CD8-positive, alpha-beta memory T cell (primary cell): ENCODE measurements at regions of chr14 and their contacts with region 1.

Region 1: DNA sequence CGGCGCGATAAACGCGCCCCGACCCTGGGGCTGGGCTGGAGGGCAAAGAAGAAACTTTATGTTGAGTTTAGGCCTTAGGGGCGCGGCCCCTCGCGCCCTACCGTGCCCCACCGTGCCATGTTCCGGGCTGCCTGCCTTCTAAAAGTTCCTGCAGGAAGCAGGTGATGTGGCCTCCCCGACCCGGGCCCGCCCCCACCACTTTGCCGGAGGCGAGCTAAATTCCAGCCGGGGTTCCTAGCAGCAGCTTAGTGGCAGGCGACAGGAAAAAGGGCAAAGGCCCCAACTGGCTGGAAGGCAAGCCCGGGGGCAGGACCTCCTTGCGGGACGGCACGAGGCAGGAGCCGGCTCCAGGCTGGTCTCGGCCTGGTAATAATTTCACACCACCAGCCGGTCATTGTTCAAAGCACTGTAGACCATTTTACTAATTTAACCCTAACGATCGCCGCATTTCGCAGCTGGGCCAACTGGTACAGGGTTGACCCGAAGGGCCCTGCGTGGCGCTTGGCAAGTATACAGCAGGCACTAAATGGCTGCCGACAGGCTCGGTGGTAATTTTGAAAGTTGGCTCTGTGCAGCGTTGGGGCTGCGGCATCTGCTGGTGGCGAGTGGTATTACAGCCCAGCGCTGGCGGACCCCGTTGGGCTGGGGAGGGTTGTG is 895 bp upstream of the CCDC88C start:
- DNase-seq: peak; percentile 73 to 88 (median 83)
- H3K4me3 ChIP-seq: peak overlapping the region; percentile 60
- H3K4me3 Mint-ChIP-seq: peak overlapping the region; percentile 81 to 93 (median 86)
- H3K27ac ChIP-seq: peak overlapping the region; percentile 29
- H3K27ac Mint-ChIP-seq: peak overlapping the region; percentile 55 to 97 (median 94)
- H3K4me1 ChIP-seq: peaks cover 30% of the 10 kb centered on the region
- H3K4me1 Mint-ChIP-seq: peaks cover 34 to 48% (median 37%) of the 10 kb centered on the region in 3 donors
- H3K27me3 ChIP-seq: no peaks in the 10 kb centered on the region
- H3K27me3 Mint-ChIP-seq: no peaks in the 10 kb centered on the region

Region 2: GRCh38 chr14:91311284-91311662 is 107.2 kb before region 1 on chr14:
- CTCF ChIA-PET with region 1: interaction called, 34 read pairs
- POLR2A ChIA-PET with region 1: interaction called, 11 read pairs
- DNase-seq: peak; percentile 37 to 77 (median 66)
- H3K4me3 ChIP-seq: peak overlapping the region; percentile 13
- H3K4me3 Mint-ChIP-seq: peak overlapping the region; percentile 9 to 81 (median 65)
- H3K27ac ChIP-seq: peak overlapping the region; percentile 77
- H3K27ac Mint-ChIP-seq: peak overlapping the region; percentile 75 to 99 (median 96)
- H3K4me1 ChIP-seq: peaks cover 41% of the 10 kb centered on the region
- H3K4me1 Mint-ChIP-seq: peaks cover 48 to 78% (median 67%) of the 10 kb centered on the region in 3 donors
- H3K27me3 ChIP-seq: no peaks in the 10 kb centered on the region
- H3K27me3 Mint-ChIP-seq: peaks cover 0 to 3% of the 10 kb centered on the region in 2 donors

Region 3: GRCh38 chr14:91323671-91324605 is 94.6 kb before region 1 on chr14:
- CTCF ChIA-PET with region 1: interaction called, 109 read pairs
- POLR2A ChIA-PET with region 1: interaction called, 21 read pairs
- DNase-seq: peak; percentile 86 to 94 (median 91)
- H3K4me3 ChIP-seq: peak overlapping the region; percentile 32
- H3K4me3 Mint-ChIP-seq: peak overlapping the region; percentile 60 to 92 (median 82)
- H3K27ac ChIP-seq: peak overlapping the region; percentile 83
- H3K27ac Mint-ChIP-seq: peak overlapping the region; percentile 97 to 99 (median 98)
- H3K4me1 ChIP-seq: peaks cover 94% of the 10 kb centered on the region
- H3K4me1 Mint-ChIP-seq: peaks cover 67 to 87% (median 86%) of the 10 kb centered on the region in 3 donors
- H3K27me3 ChIP-seq: no peaks in the 10 kb centered on the region
- H3K27me3 Mint-ChIP-seq: peaks cover 0 to 2% of the 10 kb centered on the region in 2 donors

Region 4: DNA sequence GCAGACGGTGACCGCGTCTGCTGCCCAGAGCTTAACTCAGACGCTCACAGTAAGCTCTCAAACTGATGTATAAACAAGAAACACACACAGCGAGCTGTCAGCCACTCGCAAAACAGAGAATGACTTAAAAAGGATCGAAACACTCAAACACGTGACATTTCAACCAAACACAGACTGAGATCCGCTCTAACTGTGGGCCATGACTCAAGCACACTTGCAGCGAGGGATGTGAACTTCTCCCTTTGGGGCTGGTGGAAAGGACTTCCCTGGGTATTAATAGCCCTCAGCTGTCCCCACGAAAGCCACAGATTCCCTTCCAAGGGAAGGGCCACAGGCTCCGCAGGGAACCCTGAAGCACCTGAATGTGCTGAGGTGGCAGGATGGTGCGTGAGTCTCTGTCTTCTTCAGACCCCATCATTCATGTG is 30.0 kb before region 1 on chr14:
- CTCF ChIA-PET with region 1: interaction called, 211 read pairs
- POLR2A ChIA-PET with region 1: no interaction called
- DNase-seq: peak in 2 of 5 donors; percentile 63 to 67
- H3K4me3 ChIP-seq: peak overlapping the region; percentile 33
- H3K4me3 Mint-ChIP-seq: peak overlapping the region; percentile 63 to 84 (median 73)
- H3K27ac ChIP-seq: no peak overlapping the region
- H3K27ac Mint-ChIP-seq: peak overlapping the region; percentile 84 to 93 (median 88)
- H3K4me1 ChIP-seq: peaks cover 99% of the 10 kb centered on the region
- H3K4me1 Mint-ChIP-seq: peaks cover 86 to 97% (median 93%) of the 10 kb centered on the region in 3 donors
- H3K27me3 ChIP-seq: no peaks in the 10 kb centered on the region
- H3K27me3 Mint-ChIP-seq: no peaks in the 10 kb centered on the region

Region 5: DNA sequence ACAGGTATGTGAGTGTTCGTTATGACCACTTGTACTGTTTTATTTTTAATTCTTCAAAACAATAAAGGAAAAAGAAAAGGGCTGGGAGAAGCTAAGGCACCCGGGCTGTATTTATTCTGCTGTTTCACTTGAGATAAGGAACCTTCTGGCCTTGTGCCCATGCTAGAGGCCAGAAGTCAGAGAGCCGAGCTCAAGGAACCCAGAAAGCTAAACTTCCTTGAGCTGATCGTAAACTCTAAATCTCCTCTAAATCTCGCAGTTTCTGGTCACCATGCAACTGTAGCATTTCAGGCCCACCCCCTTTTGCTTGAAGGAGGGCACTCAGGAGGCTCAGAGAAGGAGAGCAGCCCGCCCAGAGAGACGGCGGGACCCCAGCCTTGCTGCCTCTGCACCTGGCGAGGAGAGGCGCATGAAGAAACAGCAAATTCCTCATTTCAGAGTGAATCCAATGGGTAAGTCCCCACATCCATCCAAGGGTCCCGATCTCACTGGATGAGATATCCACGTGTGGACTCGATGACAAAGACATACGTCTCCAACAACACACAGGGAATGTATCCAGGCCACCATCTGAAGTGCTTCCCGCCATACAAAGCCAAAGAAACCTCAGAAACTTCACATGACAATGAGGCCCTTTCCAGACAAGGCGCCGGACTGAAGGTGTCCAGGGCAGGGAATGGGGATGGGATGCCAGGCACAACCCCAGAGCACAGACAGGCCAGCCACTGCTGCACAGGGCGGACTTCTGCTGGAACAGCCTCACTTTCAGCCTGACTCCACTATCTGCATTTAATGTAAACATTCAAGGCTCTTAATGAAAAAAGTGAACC is 15.5 kb before region 1 on chr14:
- CTCF ChIA-PET with region 1: interaction called, 211 read pairs
- POLR2A ChIA-PET with region 1: interaction called, 58 read pairs
- DNase-seq: peak in 2 of 5 donors; percentile 49 to 51
- H3K4me3 ChIP-seq: peak overlapping the region; percentile 40
- H3K4me3 Mint-ChIP-seq: peak overlapping the region; percentile 68 to 91 (median 85)
- H3K27ac ChIP-seq: peak overlapping the region; percentile 53
- H3K27ac Mint-ChIP-seq: peak overlapping the region; percentile 92 to 100 (median 95)
- H3K4me1 ChIP-seq: peaks cover 95% of the 10 kb centered on the region
- H3K4me1 Mint-ChIP-seq: peaks cover 90 to 97% (median 94%) of the 10 kb centered on the region in 3 donors
- H3K27me3 ChIP-seq: no peaks in the 10 kb centered on the region
- H3K27me3 Mint-ChIP-seq: peaks cover 0 to 1% of the 10 kb centered on the region in 2 donors